ENCODE measurements at regions of chr5 and their contacts with region 1.

Region 1: GRCh38 chr5:132490486-132491367 is at the start of gene IRF1:
- DNase-seq: peak; percentile 98
- H3K4me3 Mint-ChIP-seq: peak within 1 kb of the TSS; percentile 99
- H3K27ac Mint-ChIP-seq: peak within 1 kb of the TSS; percentile 96
- H3K4me1 Mint-ChIP-seq: peaks cover 70% of the 10 kb centered on the region
- H3K27me3 Mint-ChIP-seq: no peaks in the 10 kb centered on the region
- total RNA-seq, gene IRF1: 289 to 302 TPM

Region 2: DNA sequence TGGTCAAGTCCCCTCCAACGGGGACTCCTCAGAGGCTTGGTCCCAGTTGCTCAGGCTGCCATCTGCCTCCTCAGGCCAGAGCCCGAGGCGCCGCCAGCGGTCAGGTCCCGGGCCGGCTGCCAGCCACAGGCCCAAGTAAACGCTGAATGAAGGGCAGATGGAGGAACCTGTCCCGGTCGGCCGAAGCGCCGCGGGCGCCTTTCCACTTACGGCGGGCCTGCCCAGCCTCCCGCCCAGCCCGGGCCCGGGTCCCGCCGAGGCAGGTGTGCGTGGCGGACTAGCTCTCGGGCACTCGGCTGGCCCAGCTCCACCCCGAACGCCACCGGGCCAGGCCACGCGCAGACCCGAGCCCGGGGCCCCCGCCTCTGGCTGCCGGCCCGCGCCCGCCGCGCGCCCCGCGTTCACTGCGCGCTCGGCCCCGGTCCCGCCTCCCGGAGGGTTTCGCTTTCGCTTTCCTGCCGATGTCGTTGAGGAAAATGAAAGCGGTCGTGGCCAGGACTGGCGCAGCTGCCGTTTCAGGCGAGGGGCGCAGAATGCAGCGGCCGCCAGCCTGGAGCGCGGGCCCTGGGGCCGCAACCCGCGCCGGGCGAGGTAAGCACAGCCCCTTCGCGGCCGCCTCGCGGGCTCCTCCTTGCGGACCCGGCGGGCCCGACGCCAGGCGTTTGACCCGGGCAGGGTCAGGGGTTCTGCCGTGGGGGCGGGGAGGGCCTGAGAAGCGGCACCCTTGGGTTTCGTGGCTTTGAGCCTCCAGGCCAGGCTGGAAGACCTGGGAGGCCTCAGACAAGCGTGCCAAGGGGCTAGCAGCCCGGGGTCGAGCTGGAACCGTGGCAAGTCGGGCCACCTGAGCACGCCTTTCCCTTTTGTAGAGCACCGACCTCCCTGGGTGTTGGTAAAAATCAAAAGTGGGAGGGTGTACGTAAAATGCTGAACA is 80.0 kb before region 1 on chr5:
- CTCF ChIA-PET with region 1: interaction called, 4 read pairs
- POLR2A ChIA-PET with region 1: interaction called, 17 read pairs
- DNase-seq: peak; percentile 92
- H3K4me3 Mint-ChIP-seq: peak overlapping the region; percentile 98
- H3K27ac Mint-ChIP-seq: peak overlapping the region; percentile 99
- H3K4me1 Mint-ChIP-seq: peaks cover 67% of the 10 kb centered on the region
- H3K27me3 Mint-ChIP-seq: no peaks in the 10 kb centered on the region

Region 3: DNA sequence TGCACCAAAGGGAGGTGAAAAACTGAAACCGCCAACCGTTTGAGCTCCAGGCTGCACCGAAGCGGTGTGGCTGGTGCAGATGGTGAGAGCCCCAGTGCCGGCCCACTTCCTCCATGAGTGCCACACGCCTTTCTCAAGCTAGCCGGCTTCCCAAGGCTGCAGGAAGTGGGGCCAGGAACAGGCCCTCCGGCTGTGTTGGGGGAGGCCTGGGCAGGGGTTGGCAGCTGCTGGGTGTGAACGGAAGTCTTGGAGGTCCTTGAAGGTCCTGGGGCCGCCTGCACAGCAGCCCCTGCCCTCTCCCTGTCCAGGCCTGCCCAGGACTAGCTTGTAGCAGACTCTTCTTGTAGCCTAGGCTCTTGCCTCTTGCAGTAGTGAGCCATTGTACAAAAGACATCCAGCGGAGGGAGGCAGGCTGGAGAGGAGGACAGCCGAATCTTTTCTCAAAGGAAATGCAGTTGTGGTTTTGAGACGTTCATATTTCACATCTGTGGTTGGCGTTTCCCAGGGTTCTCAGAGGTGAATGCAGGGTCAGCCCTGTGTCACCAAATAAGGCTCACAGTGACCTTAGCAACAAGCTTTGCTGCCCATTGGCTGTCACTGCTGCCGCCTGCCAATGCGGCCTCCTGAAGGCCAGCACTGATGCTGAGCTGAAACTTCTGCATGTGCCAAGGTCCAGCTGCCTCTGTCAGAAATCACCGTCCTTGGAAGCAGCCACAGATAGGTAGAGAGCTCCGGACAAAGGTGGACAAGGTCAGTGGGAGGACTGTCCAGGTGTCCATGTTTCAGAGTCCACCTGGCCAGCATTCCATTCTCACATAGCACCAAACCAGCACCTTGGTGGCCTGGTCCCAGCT is 24.1 kb before region 1 on chr5:
- CTCF ChIA-PET with region 1: interaction called, 17 read pairs
- POLR2A ChIA-PET with region 1: interaction called, 25 read pairs
- DNase-seq: peak; percentile 83
- H3K4me3 Mint-ChIP-seq: peak overlapping the region; percentile 67
- H3K27ac Mint-ChIP-seq: peak overlapping the region; percentile 87
- H3K4me1 Mint-ChIP-seq: peaks cover 96% of the 10 kb centered on the region
- H3K27me3 Mint-ChIP-seq: no peaks in the 10 kb centered on the region

Region 4: DNA sequence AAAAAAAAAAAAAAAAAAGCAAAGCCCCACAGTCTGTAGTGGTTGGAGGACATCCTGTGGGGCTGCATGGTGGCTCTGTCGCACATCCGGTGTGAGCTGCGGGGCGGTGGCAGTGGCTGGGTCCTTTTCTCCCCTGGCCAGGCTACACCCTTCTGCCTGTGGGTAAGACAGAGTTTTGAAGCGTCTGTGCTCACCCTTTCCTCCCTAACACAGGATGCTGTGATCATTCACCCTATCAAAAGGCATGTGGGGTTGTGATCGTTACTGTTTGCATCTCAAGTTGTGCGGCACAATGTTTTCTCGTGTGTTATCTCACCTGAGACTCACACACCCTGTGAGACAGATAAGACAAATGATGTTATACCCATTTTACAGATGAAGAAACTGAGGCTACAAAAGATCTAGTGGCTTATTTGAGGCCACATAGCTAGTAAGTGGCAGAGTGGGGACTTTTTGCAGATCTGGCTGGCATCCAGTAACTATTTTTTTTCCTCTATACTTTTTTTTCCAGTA is 17.7 kb before region 1 on chr5:
- CTCF ChIA-PET with region 1: interaction called, 52 read pairs
- POLR2A ChIA-PET with region 1: interaction called, 4 read pairs
- DNase-seq: peak; percentile 92
- H3K4me3 Mint-ChIP-seq: peak overlapping the region; percentile 31
- H3K27ac Mint-ChIP-seq: peak overlapping the region; percentile 92
- H3K4me1 Mint-ChIP-seq: peaks cover 87% of the 10 kb centered on the region
- H3K27me3 Mint-ChIP-seq: no peaks in the 10 kb centered on the region

Region 5: DNA sequence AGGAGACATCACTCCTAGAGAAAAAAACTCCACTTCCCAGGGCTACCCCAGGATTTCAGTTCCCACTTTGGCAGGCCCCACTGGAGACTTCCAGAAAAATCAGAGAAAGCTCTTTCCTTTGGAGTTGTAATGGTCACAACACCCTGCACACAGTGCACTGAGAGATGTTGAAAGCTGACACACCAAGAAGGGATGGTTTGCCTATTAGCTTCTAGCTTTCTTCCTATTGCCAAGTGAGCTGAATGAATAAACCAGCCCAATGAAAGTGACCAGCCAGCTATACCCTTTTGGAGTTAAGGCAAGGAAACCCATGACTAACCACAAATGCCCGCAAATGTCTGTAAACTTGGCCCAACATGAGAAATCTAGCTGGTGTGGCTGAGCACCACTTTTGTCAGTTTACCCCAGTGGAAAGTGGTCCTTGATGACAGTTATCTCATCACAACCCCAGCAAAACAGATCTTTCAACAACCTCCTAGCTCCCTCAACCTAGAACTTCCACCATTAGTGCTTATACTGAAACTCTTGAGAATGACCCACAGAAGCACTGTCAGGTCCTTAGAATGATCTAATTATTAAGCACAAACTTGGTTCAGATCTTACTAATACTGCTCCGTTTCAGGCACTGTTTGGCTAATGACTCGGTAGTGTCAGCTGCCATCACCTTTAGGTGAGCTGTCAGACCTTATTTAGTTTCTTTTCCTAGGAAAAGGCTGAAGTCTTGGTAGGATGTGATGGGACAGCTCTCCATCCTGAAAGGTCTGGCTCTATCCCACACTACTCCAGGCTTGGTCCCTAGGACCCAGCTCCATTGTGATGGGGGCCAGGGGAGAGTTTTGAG is 11.4 kb before region 1 on chr5:
- CTCF ChIA-PET with region 1: interaction called, 52 read pairs
- POLR2A ChIA-PET with region 1: interaction called, 14 read pairs
- DNase-seq: no peak
- H3K4me3 Mint-ChIP-seq: peak overlapping the region; percentile 3
- H3K27ac Mint-ChIP-seq: peak overlapping the region; percentile 73
- H3K4me1 Mint-ChIP-seq: peaks cover 73% of the 10 kb centered on the region
- H3K27me3 Mint-ChIP-seq: no peaks in the 10 kb centered on the region

Region 6: GRCh38 chr5:132500931-132501630 is 10.4 kb after region 1 on chr5:
- CTCF ChIA-PET with region 1: interaction called, 11 read pairs
- POLR2A ChIA-PET with region 1: interaction called, 5 read pairs
- DNase-seq: peak; percentile 82
- H3K4me3 Mint-ChIP-seq: no peak overlapping the region
- H3K27ac Mint-ChIP-seq: peak overlapping the region; percentile 60
- H3K4me1 Mint-ChIP-seq: peaks cover 44% of the 10 kb centered on the region
- H3K27me3 Mint-ChIP-seq: peaks cover 3% of the 10 kb centered on the region